Naive thymus-derived CD4-positive, alpha-beta T cell (primary cell): ENCODE measurements at regions of chr2 and their contacts with region 1.

Region 1: DNA sequence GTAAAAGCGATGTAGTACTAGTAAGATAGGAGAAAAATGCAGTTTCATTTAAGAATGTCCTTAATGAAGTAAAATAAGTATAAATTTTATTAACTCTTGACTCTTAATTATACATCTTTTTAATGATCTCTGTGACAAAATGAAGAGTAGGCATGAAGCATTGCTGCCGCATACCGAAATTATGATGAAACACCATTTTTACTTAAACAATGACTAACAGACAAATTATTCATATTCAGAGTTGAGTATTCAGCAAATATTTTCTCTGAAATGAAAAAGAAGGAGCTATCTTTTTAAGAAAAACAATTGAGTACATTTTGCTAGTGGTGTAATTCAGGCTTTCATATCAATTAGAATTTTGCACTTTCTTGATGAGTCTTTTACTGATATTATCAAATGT is 150.6 kb upstream of the DOCK10 start:
- DNase-seq: no peak
- ATAC-seq: no peak
- H3K4me3 ChIP-seq: no peak overlapping the region
- H3K4me3 Mint-ChIP-seq: no peak overlapping the region
- H3K27ac ChIP-seq: no peak overlapping the region
- H3K27ac Mint-ChIP-seq: no peak overlapping the region
- H3K4me1 ChIP-seq: no peaks in the 10 kb centered on the region
- H3K4me1 Mint-ChIP-seq: no peaks in the 10 kb centered on the region
- H3K27me3 ChIP-seq: no peaks in the 10 kb centered on the region
- H3K27me3 Mint-ChIP-seq: peaks cover 0 to 16% (median 0%) of the 10 kb centered on the region in 5 donors

Region 2: DNA sequence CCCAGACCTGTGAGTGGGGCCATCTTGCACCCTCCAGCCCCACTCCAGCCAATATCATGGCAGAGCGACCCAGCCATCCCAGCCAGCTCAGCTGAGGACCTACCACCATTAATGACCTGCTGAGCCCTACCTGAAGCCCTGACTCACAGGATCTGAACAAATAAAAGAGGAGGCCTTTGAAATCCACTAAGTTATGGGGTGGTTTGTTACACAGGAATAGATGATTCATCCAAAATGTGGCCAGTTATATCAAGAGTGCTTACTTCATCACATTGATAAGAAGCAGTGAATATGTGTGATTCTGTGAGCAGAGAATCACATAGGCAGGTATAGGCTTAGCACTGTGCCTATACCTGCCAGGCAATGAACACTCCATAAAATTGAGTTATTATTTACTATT is 756.2 kb before region 1 on chr2:
- CTCF ChIA-PET with region 1: no interaction called
- POLR2A ChIA-PET with region 1: no interaction called
- intact Hi-C with region 1: no loop called
- DNase-seq: no peak
- ATAC-seq: no peak
- H3K4me3 ChIP-seq: no peak overlapping the region
- H3K4me3 Mint-ChIP-seq: no peak overlapping the region
- H3K27ac ChIP-seq: no peak overlapping the region
- H3K27ac Mint-ChIP-seq: no peak overlapping the region
- H3K4me1 ChIP-seq: no peaks in the 10 kb centered on the region
- H3K4me1 Mint-ChIP-seq: peaks cover under 1 to 11% (median 5%) of the 10 kb centered on the region in 7 donors
- H3K27me3 ChIP-seq: peaks cover 0 to 3% of the 10 kb centered on the region in 2 donors
- H3K27me3 Mint-ChIP-seq: peaks cover 29 to 45% (median 34%) of the 10 kb centered on the region in 5 donors

Region 3: DNA sequence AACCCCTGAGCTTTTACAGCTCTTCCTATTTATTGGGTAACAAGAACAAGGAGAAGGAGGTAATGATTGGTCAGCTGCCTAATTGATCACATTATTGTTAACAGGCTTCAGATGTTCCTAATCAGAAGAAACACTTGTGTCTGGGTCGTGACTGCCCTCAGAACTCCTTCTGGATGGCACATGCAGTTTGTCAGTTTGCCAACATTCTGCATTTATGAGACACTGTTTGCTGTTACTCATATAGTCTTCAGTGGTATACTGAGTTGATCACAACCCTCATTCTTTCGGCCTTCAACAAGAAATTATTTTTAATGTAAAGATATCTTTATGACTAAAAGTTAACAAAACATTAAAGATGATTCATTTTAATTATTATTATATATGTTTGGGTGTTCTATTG is 54.9 kb before region 1 on chr2:
- CTCF ChIA-PET with region 1: no interaction called
- POLR2A ChIA-PET with region 1: no interaction called
- intact Hi-C with region 1: loop called in 1 of 2 experiments (anchors 5 kb)
- DNase-seq: no peak
- ATAC-seq: no peak
- H3K4me3 ChIP-seq: no peak overlapping the region
- H3K4me3 Mint-ChIP-seq: no peak overlapping the region
- H3K27ac ChIP-seq: no peak overlapping the region
- H3K27ac Mint-ChIP-seq: no peak overlapping the region
- H3K4me1 ChIP-seq: no peaks in the 10 kb centered on the region
- H3K4me1 Mint-ChIP-seq: no peaks in the 10 kb centered on the region
- H3K27me3 ChIP-seq: no peaks in the 10 kb centered on the region
- H3K27me3 Mint-ChIP-seq: peaks cover 0 to 23% (median 3%) of the 10 kb centered on the region in 5 donors

Region 4: GRCh38 chr2:225236769-225237323 is 44.0 kb after region 1 on chr2:
- CTCF ChIA-PET with region 1: no interaction called
- POLR2A ChIA-PET with region 1: no interaction called
- intact Hi-C with region 1: loop called in 1 of 2 experiments (anchors 2 kb)
- DNase-seq: no peak
- ATAC-seq: no peak
- H3K4me3 ChIP-seq: no peak overlapping the region
- H3K4me3 Mint-ChIP-seq: no peak overlapping the region
- H3K27ac ChIP-seq: no peak overlapping the region
- H3K27ac Mint-ChIP-seq: no peak overlapping the region
- H3K4me1 ChIP-seq: no peaks in the 10 kb centered on the region
- H3K4me1 Mint-ChIP-seq: peaks cover 0 to 3% (median 0%) of the 10 kb centered on the region in 7 donors
- H3K27me3 ChIP-seq: no peaks in the 10 kb centered on the region
- H3K27me3 Mint-ChIP-seq: peaks cover 0 to 13% (median 3%) of the 10 kb centered on the region in 5 donors